Activated CD8-positive, alpha-beta T cell treated with anti-CD3 and anti-CD28 coated beads, Interleukin-2, amount 10 ng/mL, durations not matched to agents 7 days and 5 days (primary cell): ENCODE measurements at regions of chr22 and their contacts with region 1.

Region 1: DNA sequence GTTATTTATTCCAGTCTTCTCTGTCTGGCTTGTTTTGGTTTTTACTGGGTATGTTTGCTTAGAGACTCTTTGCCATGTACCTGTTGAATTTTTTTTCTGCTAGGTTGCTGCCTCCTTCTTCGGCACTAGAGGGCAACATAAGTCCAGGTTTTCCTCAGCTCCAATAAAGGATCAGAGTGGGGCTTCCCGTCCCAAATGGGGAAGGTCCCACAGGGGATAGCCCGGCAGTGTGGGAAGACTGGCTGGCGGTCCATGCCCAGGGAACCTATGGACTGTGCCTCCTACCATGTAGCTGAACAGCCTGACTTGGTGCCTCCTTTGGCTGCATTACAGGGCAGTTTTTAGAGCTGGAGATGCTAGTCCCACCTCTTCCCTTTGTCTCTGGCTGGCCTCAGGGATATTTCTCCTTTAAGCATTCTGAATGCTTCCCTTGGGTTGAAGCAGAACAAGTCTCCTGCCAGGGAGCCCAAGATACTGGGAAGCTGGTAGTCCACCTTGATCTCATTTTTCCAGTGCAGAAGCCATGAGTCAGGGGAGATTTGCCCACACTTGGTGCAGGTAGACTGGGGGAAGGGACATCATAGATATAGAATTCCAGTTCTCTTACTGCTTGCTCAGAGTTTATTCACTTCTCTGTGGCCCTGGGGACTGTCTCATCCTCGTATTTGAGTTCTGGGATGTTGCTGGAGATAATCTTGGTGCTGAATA is 60.2 kb downstream of the BRD1 start:
- DNase-seq: peak; percentile 47
- ATAC-seq: peak; percentile 29
- H3K4me3 Mint-ChIP-seq: no peak overlapping the region
- H3K27ac Mint-ChIP-seq: peak overlapping the region; percentile 45
- H3K4me1 Mint-ChIP-seq: peaks cover 20% of the 10 kb centered on the region
- H3K27me3 Mint-ChIP-seq: no peaks in the 10 kb centered on the region

Region 2: DNA sequence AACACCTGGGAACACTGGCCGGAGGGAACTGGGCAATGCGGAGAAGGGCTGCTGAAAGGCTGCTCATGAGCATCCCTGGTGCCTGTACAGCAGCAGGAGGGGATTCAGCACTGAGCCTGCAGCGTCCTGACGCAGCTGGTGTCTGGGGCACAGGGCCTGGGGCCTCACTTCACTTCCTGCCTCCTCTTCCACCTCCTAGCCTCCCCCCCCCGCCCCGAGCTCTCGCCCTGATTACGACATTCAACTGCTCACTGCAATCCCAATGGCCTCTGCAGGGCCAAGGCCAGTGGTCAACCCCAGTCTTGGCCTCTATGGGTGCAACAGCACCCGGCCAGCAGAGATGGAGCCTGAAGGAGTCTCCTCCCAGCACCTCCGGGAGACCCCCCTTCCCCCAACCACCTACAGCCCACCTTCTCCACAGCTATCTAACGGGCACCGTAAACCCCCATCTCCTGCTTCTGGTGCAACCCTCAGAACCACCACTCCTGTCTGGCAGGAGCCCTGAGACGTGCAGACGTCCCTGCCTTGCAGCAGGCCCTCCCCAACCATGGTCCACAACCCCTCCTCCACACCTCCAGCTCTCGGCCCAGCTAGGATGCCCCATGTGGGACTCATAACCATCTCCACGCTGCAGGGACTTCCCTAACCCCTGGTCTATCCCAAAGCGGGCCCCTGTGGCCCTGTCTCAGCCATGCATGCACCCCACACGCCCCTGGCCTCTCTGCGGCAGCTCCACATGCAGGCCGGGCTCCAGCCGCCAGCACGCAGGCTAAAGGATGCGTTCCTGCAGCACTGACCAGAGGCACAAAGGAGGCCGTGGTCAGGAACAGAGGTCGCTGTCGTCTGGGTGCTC is 22.0 kb after region 1 on chr22:
- CTCF ChIA-PET with region 1: interaction called, 20 read pairs
- POLR2A ChIA-PET with region 1: no interaction called
- DNase-seq: peak; percentile 66
- ATAC-seq: peak; percentile 83
- H3K4me3 Mint-ChIP-seq: peak overlapping the region; percentile 60
- H3K27ac Mint-ChIP-seq: peak overlapping the region; percentile 92
- H3K4me1 Mint-ChIP-seq: peaks cover 72% of the 10 kb centered on the region
- H3K27me3 Mint-ChIP-seq: no peaks in the 10 kb centered on the region

Region 3: GRCh38 chr22:49867303-49868265 is 100.1 kb after region 1 on chr22:
- CTCF ChIA-PET with region 1: no interaction called
- POLR2A ChIA-PET with region 1: no interaction called
- DNase-seq: no peak
- ATAC-seq: peak; percentile 52
- H3K4me3 Mint-ChIP-seq: no peak overlapping the region
- H3K27ac Mint-ChIP-seq: peak overlapping the region; percentile 63
- H3K4me1 Mint-ChIP-seq: peaks cover 63% of the 10 kb centered on the region
- H3K27me3 Mint-ChIP-seq: no peaks in the 10 kb centered on the region

Region 4: DNA sequence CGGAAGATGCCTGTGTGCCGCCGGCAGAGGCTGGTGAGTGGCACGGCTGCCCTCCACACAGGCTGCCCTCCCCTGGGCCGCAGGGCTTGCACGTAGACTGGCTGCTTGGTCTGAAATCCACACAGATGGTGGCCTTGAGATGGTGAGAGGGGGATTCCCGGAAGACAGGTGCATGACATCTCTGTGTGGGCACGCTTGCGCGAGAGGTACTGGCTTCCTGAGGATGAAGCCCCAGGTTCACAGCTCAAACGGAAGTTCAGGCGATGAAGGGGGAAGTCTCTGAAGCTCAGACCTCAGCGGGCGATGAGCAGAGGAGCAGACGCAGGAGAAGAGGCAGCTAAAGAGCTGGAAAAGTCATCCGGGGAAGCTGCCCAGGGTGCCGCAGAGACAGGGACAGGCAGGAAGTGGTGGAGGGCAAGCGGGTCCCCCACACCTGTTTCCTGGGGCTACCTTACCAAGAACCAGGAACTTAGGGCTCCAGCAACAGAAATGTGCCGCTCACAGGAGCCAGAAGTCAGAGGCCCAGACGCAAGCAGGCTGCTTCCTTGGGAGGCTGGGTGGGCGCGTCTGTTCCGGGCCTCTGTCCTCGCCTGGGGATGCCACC is 158.1 kb after region 1 on chr22:
- CTCF ChIA-PET with region 1: interaction called, 17 read pairs
- POLR2A ChIA-PET with region 1: no interaction called
- DNase-seq: peak; percentile 81
- ATAC-seq: peak; percentile 77
- H3K4me3 Mint-ChIP-seq: peak overlapping the region; percentile 67
- H3K27ac Mint-ChIP-seq: peak overlapping the region; percentile 95
- H3K4me1 Mint-ChIP-seq: peaks cover 42% of the 10 kb centered on the region
- H3K27me3 Mint-ChIP-seq: no peaks in the 10 kb centered on the region

Region 5: GRCh38 chr22:49930739-49931412 is 163.4 kb after region 1 on chr22:
- CTCF ChIA-PET with region 1: interaction called, 17 read pairs
- POLR2A ChIA-PET with region 1: no interaction called
- DNase-seq: peak; percentile 63
- ATAC-seq: no peak
- H3K4me3 Mint-ChIP-seq: no peak overlapping the region
- H3K27ac Mint-ChIP-seq: peak overlapping the region; percentile 60
- H3K4me1 Mint-ChIP-seq: peaks cover 34% of the 10 kb centered on the region
- H3K27me3 Mint-ChIP-seq: no peaks in the 10 kb centered on the region